Ascending aorta (tissue), 2 donors: ENCODE measurements at regions of chr9 and their contacts with region 1.

Region 1: DNA sequence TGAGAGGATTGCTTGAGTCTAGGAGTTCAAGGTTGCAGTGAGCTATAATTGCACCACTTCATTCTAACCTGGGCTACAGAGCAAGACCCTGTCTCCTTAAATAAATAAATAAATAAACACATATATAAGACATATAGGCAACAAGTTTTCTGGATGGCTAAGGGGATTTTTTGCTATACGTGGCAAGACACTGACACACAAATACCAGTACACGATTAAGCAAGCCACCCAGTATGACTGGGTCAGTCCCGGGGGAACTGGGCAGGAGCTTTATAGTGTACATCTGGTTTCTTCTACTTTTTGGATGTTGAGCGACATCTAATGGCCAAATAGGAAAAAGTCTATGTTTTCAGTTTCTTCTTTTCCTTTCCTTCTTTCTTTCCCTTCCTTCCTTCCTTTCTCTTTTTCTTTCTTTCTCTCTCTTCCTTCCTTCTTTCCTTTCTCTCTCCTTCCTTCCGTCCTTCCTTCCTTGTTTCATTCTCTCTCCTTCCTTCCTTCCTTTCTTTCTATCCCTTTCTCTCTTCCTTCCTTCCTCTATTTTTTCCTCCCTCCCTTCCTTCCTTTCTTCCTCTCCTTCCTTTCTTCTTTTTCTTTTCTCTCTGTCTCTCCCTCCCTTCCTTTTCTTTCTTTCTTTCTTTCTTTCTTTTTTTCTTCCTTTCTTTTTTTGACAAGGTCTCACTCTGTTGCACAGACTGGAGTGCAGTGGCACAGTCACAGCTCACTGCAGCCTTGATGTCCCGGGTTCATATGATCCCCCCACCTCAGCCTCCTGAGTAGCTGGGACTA is 47.0 kb upstream of the PLIN2 start:
- DNase-seq: peak; percentile 51 to 92
- H3K4me3 ChIP-seq: no peak overlapping the region
- H3K27ac ChIP-seq: no peak overlapping the region
- H3K4me1 ChIP-seq: peaks cover 0 to 4% of the 10 kb centered on the region in 2 donors
- H3K27me3 ChIP-seq: no peaks in the 10 kb centered on the region
- CTCF ChIP-seq: peak; percentile 54 to 63 (median 61)

Region 2: DNA sequence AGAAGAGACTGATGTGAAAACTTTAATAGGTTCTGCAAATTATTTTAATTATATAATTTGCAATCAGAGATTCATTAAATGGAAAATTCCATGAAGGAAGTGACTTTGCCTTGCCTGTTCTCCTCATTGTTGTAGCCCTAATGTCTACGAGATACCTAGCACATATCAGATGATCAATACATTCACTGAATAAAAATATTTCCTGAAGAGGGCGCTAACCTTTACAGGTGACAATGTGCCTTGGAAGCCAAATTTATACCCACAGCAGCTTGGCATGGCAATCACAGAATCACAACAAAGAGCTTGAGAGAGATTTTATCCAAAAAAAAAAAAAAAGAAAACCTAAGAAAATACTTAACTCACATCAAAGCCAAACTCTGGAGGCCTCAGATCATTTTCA is 89.0 kb before region 1 on chr9:
- intact Hi-C with region 1: loop called (anchors 5 kb)
- DNase-seq: no peak
- H3K4me3 ChIP-seq: no peak overlapping the region
- H3K27ac ChIP-seq: no peak overlapping the region
- H3K4me1 ChIP-seq: no peaks in the 10 kb centered on the region
- H3K27me3 ChIP-seq: no peaks in the 10 kb centered on the region
- CTCF ChIP-seq: peak; percentile 8 to 26 (median 20)

Region 3: DNA sequence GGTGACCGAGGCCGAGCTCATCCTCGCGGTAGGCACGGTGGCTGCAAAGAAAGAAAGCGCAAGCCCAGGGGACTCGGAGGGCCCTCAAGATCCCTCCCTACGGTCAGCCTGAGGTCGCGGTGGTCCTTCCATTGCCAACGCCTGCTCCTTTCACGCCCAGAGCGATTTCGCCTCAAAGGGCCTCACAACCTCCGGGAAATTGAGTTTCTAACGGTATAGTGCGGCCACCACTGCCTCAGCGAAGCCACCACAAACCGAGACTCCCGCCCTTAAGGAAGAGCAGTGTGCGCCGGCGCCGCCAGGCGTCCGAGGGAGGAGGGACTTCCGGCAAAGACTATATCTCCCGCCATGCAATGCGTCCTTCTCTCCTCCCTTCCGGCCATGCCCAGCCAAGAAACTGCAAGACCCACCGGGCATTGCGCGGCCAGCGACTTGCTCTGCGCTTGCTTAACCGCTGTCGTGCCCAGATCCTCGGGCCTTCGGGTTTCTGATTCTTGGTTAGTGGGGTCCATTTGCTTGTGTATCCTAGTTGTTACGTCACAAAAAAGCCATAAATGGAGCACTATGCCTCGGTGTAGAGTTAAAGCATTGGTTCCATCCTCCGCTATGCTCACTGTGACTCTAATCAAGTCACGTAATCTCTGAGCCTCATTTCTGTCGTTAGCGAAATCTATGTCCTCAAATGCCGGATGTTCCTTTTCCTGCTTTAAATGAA is 71.5 kb before region 1 on chr9 and contains the start of gene HAUS6:
- intact Hi-C with region 1: loop called (anchors 1 kb)
- DNase-seq: peak; percentile 83 to 99
- H3K4me3 ChIP-seq: peak within 1 kb of the TSS; percentile 67 to 74
- H3K27ac ChIP-seq: peak within 1 kb of the TSS; percentile 85 to 87
- H3K4me1 ChIP-seq: peaks cover 10 to 11% of the 10 kb centered on the region in 2 donors
- H3K27me3 ChIP-seq: no peaks in the 10 kb centered on the region
- CTCF ChIP-seq: peak in 2 of 3 experiments; percentile 41 to 69
- total RNA-seq, gene HAUS6: 3.4 TPM

Region 4: GRCh38 chr9:19148170-19148569 is 26.1 kb before region 1 on chr9:
- intact Hi-C with region 1: no loop called
- DNase-seq: no peak
- H3K4me3 ChIP-seq: no peak overlapping the region
- H3K27ac ChIP-seq: no peak overlapping the region
- H3K4me1 ChIP-seq: no peaks in the 10 kb centered on the region
- H3K27me3 ChIP-seq: no peaks in the 10 kb centered on the region
- CTCF ChIP-seq: no peak